ENCODE measurements at regions of chr1 and their contacts with region 1.

Region 1: DNA sequence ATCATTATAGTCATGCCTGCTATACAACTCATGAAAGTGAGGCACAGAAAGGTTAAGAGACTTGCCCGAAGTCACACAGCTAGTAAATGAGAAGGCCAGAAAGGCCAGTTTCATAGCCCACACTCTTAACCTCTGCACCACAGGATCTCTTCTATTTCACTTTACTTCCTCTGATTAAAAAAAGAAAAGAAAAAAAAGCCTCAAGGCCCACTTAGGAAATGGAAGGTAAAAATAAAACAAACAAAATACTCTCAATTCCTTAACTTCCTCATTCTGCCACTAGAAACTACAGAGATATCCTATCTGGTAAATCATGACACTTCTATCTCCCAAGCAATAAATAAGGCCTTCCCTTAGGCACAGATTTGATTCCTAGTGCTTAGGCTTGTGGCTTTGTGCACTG is 7.6 kb upstream of the ENAH start:
- DNase-seq: no peak
- H3K4me3 ChIP-seq: no peak overlapping the region
- H3K27ac ChIP-seq: no peak overlapping the region
- H3K4me1 ChIP-seq: peaks cover 25% of the 10 kb centered on the region
- H3K27me3 ChIP-seq: no peaks in the 10 kb centered on the region
- CTCF ChIP-seq: no peak
- POLR2A ChIP-seq: no peak

Region 2: GRCh38 chr1:225733254-225733653 is 72.7 kb after region 1 on chr1:
- CTCF ChIA-PET with region 1: no interaction called
- POLR2A ChIA-PET with region 1: interaction called, 3 read pairs
- dilution Hi-C with region 1: loop called (anchors 5 kb)
- intact Hi-C with region 1: no loop called
- DNase-seq: no peak
- H3K4me3 ChIP-seq: no peak overlapping the region
- H3K27ac ChIP-seq: no peak overlapping the region
- H3K4me1 ChIP-seq: peaks cover 18% of the 10 kb centered on the region
- H3K27me3 ChIP-seq: no peaks in the 10 kb centered on the region
- CTCF ChIP-seq: no peak
- POLR2A ChIP-seq: no peak